ENCODE measurements at regions of chr1 and their contacts with region 1.

Region 1: GRCh38 chr1:98387701-98388100 is 273.8 kb upstream of the SNX7 start:
- DNase-seq: no peak
- ATAC-seq: no peak
- H3K4me3 ChIP-seq: no peak overlapping the region
- H3K27ac ChIP-seq: peak overlapping the region in 1 of 10 donors; percentile 83
- H3K4me1 ChIP-seq: peaks cover 0 to 35% (median 0%) of the 10 kb centered on the region in 9 donors
- H3K27me3 ChIP-seq: no peaks in the 10 kb centered on the region
- CTCF ChIP-seq: no peak

Region 2: DNA sequence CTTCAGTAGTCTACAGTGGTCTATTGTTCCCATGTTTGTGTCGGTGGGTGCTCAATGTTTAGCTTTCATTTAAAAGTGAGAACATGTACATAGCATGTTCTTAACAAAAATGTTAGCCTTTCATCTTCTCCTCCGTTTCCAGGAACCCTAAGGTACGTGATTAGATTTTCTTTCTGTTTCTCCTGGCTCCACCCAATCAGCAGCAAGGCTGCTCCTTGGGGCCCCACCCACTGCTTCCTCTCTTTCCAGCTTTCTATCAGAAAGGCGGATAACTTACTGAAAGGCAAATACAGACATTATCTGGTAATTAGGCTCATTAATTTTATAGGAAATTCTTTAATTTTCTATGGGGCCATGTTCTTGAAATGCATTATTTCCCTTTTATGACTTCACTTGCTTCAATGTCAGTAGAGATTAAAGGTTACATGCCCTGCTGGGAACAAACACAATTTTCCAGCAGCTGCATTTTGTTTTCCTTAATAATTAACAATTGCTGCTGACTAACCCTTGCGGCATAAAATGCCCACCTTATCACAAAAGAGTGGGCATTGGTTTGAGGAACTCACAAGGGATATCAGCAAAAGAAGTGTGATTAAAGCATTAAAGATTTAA is 51.1 kb before region 1 on chr1:
- intact Hi-C with region 1: no loop called
- DNase-seq: no peak
- ATAC-seq: no peak
- H3K4me3 ChIP-seq: no peak overlapping the region
- H3K27ac ChIP-seq: no peak overlapping the region
- H3K4me1 ChIP-seq: peaks cover 0 to 6% (median 0%) of the 10 kb centered on the region in 9 donors
- H3K27me3 ChIP-seq: peaks cover 0 to 7% (median 0%) of the 10 kb centered on the region in 7 donors
- CTCF ChIP-seq: no peak

Region 3: GRCh38 chr1:98371764-98372163 is 15.9 kb before region 1 on chr1:
- intact Hi-C with region 1: loop called in 1 of 10 experiments (anchors 1 kb)
- DNase-seq: no peak
- ATAC-seq: no peak
- H3K4me3 ChIP-seq: no peak overlapping the region
- H3K27ac ChIP-seq: no peak overlapping the region
- H3K4me1 ChIP-seq: no peaks in the 10 kb centered on the region
- H3K27me3 ChIP-seq: no peaks in the 10 kb centered on the region
- CTCF ChIP-seq: no peak

Measured in heart right ventricle (tissue), 16 donors.